Activated T-helper 2 cell treated with anti-CD3 and anti-CD28 coated beads, Interferon-gamma antibody, Interleukin-2, Interleukin-4, amounts not matched to agents 10 μg/mL and 5 μg/mL and 100 μg/mL, durations not matched to agents 14 hours and 24 hours and 36 hours (primary cell): ENCODE measurements at regions of chr3 and their contacts with region 1.

Region 1: GRCh38 chr3:192917404-192918274 is at the start of gene MB21D2:
- DNase-seq: peak; percentile 54
- H3K4me3 Mint-ChIP-seq: peak within 1 kb of the TSS; percentile 97
- H3K27ac Mint-ChIP-seq: peak within 1 kb of the TSS; percentile 90
- H3K4me1 Mint-ChIP-seq: peaks cover 35% of the 10 kb centered on the region
- H3K27me3 Mint-ChIP-seq: peaks cover 61% of the 10 kb centered on the region
- total RNA-seq, gene MB21D2: 17.7 TPM in 2 replicates

Region 2: DNA sequence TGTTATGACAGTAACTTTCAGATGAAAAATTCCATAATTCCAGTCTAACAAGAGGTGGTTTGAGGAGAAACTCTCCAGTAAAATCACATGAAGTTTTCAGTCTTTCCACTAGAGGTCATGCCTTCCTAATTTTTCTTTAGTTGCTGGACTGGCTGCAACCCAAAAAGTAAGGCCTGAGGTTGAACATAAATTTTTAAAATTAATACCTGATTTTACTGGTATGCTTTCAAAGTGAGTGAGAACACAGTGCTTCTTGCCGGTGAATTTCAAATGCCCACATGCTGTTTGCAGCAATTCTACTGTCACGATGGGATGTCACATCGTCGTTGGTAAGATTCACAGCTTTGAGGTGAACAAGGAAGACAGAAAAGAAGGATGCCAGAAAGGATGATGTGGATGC is 101.3 kb before region 1 on chr3:
- intact Hi-C with region 1: loop called (anchors 1 kb)
- DNase-seq: no peak
- H3K4me3 Mint-ChIP-seq: no peak overlapping the region
- H3K27ac Mint-ChIP-seq: no peak overlapping the region
- H3K4me1 Mint-ChIP-seq: peaks cover 45% of the 10 kb centered on the region
- H3K27me3 Mint-ChIP-seq: peaks cover 3% of the 10 kb centered on the region

Region 3: GRCh38 chr3:192851821-192852424 is 65.7 kb before region 1 on chr3:
- intact Hi-C with region 1: loop called (anchors 2 kb)
- DNase-seq: no peak
- H3K4me3 Mint-ChIP-seq: no peak overlapping the region
- H3K27ac Mint-ChIP-seq: peak overlapping the region; percentile 38
- H3K4me1 Mint-ChIP-seq: peaks cover 46% of the 10 kb centered on the region
- H3K27me3 Mint-ChIP-seq: no peaks in the 10 kb centered on the region

Region 4: DNA sequence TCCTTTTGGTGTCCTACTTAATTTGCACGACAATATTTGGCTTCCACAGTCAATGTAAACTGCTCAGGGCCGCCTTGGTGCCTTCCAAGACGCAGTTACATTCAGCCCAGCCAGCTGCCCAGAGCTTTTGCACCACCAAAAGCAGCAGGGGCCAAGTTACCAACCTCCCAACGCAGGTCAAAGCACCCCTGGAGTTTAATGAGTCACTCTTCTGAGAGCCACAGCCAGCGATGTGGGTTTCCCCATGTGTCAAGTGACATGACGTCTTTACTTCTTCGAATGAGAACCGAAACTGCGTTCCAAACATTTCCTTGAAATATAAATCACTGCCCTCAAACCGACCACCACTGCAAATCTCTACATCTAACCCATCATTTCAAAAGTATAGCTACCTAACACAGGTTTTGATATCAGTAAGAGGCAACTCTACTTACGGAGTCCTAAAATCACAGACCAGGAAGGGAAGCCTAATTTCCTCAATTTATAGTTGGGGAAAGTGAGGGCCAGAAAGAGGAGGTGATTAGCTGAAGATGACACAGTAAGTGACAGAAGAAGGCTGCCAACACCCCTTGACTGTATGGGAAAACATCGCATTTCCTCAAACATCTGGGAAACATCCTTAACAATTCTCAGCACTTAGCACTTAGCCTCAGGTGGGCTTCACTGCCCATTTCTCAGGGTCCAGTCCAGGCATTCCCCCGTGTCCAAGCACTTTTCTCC is 24.5 kb before region 1 on chr3:
- intact Hi-C with region 1: loop called (anchors 1 kb)
- DNase-seq: peak; percentile 77
- H3K4me3 Mint-ChIP-seq: peak overlapping the region; percentile 34
- H3K27ac Mint-ChIP-seq: peak overlapping the region; percentile 82
- H3K4me1 Mint-ChIP-seq: peaks cover 79% of the 10 kb centered on the region
- H3K27me3 Mint-ChIP-seq: peaks cover 10% of the 10 kb centered on the region

Region 5: DNA sequence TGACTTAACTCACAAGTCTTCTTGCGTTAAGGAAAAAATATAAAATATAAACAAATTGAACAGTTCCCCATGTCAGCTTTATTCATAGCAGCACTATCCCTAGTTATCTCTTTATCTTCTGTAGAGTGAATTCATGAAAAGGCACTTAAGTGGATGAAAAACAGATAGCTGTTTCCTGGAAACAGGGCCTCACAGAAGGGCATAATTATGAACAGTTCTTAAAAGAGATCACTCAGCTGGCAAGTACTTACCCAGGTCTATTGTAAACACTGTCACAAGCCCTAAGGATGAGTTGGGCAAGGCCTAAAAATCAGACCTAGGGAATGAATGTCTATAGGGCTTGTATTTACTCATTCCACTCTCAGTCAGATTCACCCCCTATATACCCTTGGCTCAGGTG is 10.7 kb before region 1 on chr3:
- intact Hi-C with region 1: loop called (anchors 1 kb)
- DNase-seq: no peak
- H3K4me3 Mint-ChIP-seq: no peak overlapping the region
- H3K27ac Mint-ChIP-seq: peak overlapping the region; percentile 72
- H3K4me1 Mint-ChIP-seq: peaks cover 35% of the 10 kb centered on the region
- H3K27me3 Mint-ChIP-seq: peaks cover 2% of the 10 kb centered on the region

Region 6: GRCh38 chr3:192957441-192958021 is 39.9 kb after region 1 on chr3:
- intact Hi-C with region 1: loop called (anchors 5 kb)
- DNase-seq: no peak
- H3K4me3 Mint-ChIP-seq: no peak overlapping the region
- H3K27ac Mint-ChIP-seq: peak overlapping the region; percentile 64
- H3K4me1 Mint-ChIP-seq: peaks cover 25% of the 10 kb centered on the region
- H3K27me3 Mint-ChIP-seq: no peaks in the 10 kb centered on the region